Activated T-helper 1 cell treated with anti-CD3 and anti-CD28 coated beads, Interleukin-12 subunit alpha, Interleukin-12 subunit beta, Interleukin-2, Interleukin-4 antibody, amounts not matched to agents 30 ng/mL and 10 ng/mL and 1 ng/mL, durations not matched to agents 14 hours and 24 hours and 36 hours (primary cell): ENCODE measurements at regions of chr11 and their contacts with region 1.

Region 1: GRCh38 chr11:76444384-76445123 is at the start of gene EMSY:
- DNase-seq: peak; percentile 91
- H3K4me3 Mint-ChIP-seq: peak within 1 kb of the TSS; percentile 98
- H3K27ac Mint-ChIP-seq: peak within 1 kb of the TSS; percentile 96
- H3K4me1 Mint-ChIP-seq: peaks cover 36% of the 10 kb centered on the region
- H3K27me3 Mint-ChIP-seq: no peaks in the 10 kb centered on the region
- total RNA-seq, gene EMSY: 30.4 and 34.8 TPM in 2 replicates

Region 2: GRCh38 chr11:75814686-75815344 is 629.7 kb before region 1 on chr11 and contains the start of gene UVRAG:
- intact Hi-C with region 1: loop called (anchors 1 kb)
- DNase-seq: peak; percentile 97
- H3K4me3 Mint-ChIP-seq: peak within 1 kb of the TSS; percentile 97
- H3K27ac Mint-ChIP-seq: peak within 1 kb of the TSS; percentile 93
- H3K4me1 Mint-ChIP-seq: peaks cover 24% of the 10 kb centered on the region
- H3K27me3 Mint-ChIP-seq: peaks cover 4% of the 10 kb centered on the region
- total RNA-seq, gene UVRAG: 18.6 and 19.5 TPM in 2 replicates

Region 3: GRCh38 chr11:76235233-76236091 is 209.1 kb before region 1 on chr11:
- intact Hi-C with region 1: loop called (anchors 1 kb)
- DNase-seq: peak; percentile 85
- H3K4me3 Mint-ChIP-seq: peak overlapping the region; percentile 92
- H3K27ac Mint-ChIP-seq: peak overlapping the region; percentile 84
- H3K4me1 Mint-ChIP-seq: peaks cover 50% of the 10 kb centered on the region
- H3K27me3 Mint-ChIP-seq: peaks cover 30% of the 10 kb centered on the region

Region 4: DNA sequence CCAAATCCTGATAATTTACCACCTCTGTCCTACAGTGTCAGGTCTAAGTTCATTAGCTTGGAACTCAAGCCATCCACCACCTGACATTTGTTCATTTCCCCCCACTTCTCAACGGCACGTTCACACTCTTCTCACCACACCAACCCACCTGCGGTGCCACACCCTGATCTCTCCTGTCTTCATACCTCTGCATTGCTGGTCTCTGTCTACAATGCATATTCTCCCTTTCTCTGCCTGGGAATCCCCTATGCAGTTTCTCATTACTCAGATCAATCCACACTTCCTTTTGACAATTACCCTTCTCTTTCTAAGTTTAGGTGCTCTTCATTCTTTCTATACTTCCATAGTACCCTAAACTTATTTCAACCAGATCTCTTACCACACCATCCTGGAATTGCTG is 20.2 kb before region 1 on chr11:
- intact Hi-C with region 1: loop called (anchors 1 kb)
- DNase-seq: no peak
- H3K4me3 Mint-ChIP-seq: no peak overlapping the region
- H3K27ac Mint-ChIP-seq: peak overlapping the region; percentile 8
- H3K4me1 Mint-ChIP-seq: peaks cover 23% of the 10 kb centered on the region
- H3K27me3 Mint-ChIP-seq: peaks cover 5% of the 10 kb centered on the region

Region 5: DNA sequence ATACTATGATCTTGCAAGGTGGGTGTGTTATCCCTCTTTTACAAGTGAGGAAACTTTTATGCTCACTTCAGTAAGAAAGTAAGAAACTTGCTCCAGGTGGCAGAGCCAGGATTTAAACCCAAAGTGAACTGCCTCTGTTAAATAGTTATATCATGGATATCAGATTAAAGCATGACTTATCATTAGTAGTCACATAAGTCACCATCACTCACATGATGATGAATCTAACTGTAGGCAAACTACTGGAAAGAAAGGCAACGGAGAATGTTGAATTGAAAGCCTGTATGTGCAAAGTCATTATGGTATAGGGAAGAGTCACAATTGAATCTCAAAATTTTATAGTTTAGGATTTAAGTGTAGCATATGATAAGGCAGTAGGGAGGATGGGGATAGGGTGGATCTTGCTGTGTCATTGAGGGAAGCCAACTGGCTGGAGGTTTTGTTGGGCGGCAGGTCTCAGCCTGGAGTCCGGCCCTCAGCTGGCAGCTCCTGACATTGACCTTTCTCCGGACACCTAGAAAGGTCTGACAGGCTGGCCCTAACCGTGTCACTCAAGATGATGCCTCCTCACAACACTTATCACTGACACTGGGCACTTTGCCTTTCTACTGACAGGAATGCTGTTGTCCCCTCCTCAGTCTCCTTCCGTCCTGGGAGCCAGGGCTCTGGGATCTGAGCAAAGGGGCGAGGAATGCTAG is 98.6 kb after region 1 on chr11:
- intact Hi-C with region 1: no loop called
- DNase-seq: no peak
- H3K4me3 Mint-ChIP-seq: no peak overlapping the region
- H3K27ac Mint-ChIP-seq: no peak overlapping the region
- H3K4me1 Mint-ChIP-seq: peaks cover 10% of the 10 kb centered on the region
- H3K27me3 Mint-ChIP-seq: no peaks in the 10 kb centered on the region

Region 6: GRCh38 chr11:76807206-76807875 is 362.8 kb after region 1 on chr11:
- intact Hi-C with region 1: loop called (anchors 2 kb)
- DNase-seq: peak; percentile 38
- H3K4me3 Mint-ChIP-seq: no peak overlapping the region
- H3K27ac Mint-ChIP-seq: no peak overlapping the region
- H3K4me1 Mint-ChIP-seq: peaks cover 43% of the 10 kb centered on the region
- H3K27me3 Mint-ChIP-seq: peaks cover 18% of the 10 kb centered on the region

Region 7: GRCh38 chr11:77820563-77821348 is 1376.2 kb after region 1 on chr11 and contains the starts of genes AAMDC and RSF1:
- intact Hi-C with region 1: loop called (anchors 2 kb)
- DNase-seq: peak; percentile 95
- H3K4me3 Mint-ChIP-seq: peak within 1 kb of the TSS; percentile 97
- H3K27ac Mint-ChIP-seq: peak within 1 kb of the TSS; percentile 94
- H3K4me1 Mint-ChIP-seq: peaks cover 38% of the 10 kb centered on the region
- H3K27me3 Mint-ChIP-seq: peaks cover 2% of the 10 kb centered on the region
- total RNA-seq, gene AAMDC: 1.5 and 2.4 TPM in 2 replicates
- total RNA-seq, gene RSF1: 47.0 and 49.2 TPM in 2 replicates